ENCODE measurements at regions of chr2 and their contacts with region 1.

Region 1: DNA sequence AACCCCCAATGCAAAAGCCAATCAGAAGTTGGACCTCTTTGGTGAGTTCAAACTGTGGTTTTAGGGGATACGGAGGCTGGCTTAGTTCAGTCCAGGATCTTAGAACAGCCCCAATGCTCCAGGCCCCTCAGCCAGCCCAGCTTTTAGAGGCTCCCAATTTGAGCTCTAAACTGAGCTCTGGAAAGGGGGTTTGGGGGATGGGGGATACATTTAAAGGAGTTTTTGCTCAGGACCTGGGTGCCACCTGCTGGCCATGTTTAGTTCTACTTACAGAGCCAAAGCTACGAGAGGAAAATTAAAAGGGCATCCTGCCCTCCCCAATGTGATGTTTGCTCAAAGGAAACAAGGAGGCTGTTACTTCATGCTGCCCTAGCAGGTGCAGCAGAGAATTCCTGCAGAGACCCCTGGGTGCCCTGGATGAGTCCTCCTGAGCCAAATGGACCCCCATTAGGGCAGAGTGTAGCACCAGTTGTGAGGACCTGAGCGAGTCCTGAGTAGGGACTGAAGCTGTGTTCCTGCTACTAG is 15.9 kb upstream of the TMEM214 start:
- DNase-seq: peak; percentile 69
- ATAC-seq: peak; percentile 55
- H3K4me3 Mint-ChIP-seq: no peak overlapping the region
- H3K27ac Mint-ChIP-seq: no peak overlapping the region
- H3K4me1 Mint-ChIP-seq: no peaks in the 10 kb centered on the region
- H3K27me3 Mint-ChIP-seq: no peaks in the 10 kb centered on the region

Region 2: DNA sequence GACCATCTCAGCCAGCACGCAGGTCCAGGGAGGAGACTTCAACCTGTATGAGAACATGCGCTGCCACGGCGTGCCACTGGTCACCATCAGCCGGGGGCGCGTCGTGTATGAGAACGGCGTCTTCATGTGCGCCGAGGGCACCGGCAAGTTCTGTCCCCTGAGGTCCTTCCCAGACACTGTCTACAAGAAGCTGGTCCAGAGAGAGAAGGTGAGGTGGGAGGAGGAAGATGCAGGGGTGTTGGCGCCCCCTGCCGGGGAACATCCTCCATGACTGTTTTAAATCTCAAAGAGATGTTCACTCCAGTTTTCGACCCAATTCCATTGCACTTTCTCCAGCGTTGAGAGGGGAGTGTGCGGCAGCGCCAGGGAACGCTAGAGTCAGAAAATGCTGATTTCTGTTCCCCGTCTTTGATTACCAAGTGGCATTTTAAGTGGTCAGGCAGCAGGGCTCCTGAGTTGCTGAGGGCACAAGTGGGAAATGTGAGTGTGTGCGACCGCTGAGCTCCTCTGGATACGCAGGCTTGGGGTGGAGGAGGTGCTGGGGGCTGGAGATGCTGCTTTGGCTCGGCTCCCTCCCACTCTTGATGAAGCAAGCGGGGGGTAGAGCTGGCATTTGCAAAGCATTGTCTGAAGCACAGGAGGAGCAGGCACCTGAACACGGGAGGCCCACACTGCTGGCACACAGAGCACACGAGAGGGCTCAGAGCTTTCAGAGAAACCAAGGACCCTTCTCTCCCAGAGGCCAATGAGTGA is 74.1 kb before region 1 on chr2:
- CTCF ChIA-PET with region 1: interaction called, 11 read pairs
- POLR2A ChIA-PET with region 1: no interaction called
- intact Hi-C with region 1: no loop called
- DNase-seq: peak; percentile 84
- ATAC-seq: peak; percentile 64
- H3K4me3 Mint-ChIP-seq: no peak overlapping the region
- H3K27ac Mint-ChIP-seq: no peak overlapping the region
- H3K4me1 Mint-ChIP-seq: peaks cover 2% of the 10 kb centered on the region
- H3K27me3 Mint-ChIP-seq: peaks cover 4% of the 10 kb centered on the region

Region 3: GRCh38 chr2:26976237-26976636 is 40.6 kb before region 1 on chr2:
- CTCF ChIA-PET with region 1: interaction called, 12 read pairs
- POLR2A ChIA-PET with region 1: no interaction called
- intact Hi-C with region 1: no loop called
- DNase-seq: no peak
- ATAC-seq: no peak
- H3K4me3 Mint-ChIP-seq: no peak overlapping the region
- H3K27ac Mint-ChIP-seq: no peak overlapping the region
- H3K4me1 Mint-ChIP-seq: peaks cover 6% of the 10 kb centered on the region
- H3K27me3 Mint-ChIP-seq: no peaks in the 10 kb centered on the region

Region 4: GRCh38 chr2:26982102-26982742 is 34.6 kb before region 1 on chr2:
- CTCF ChIA-PET with region 1: interaction called, 12 read pairs
- POLR2A ChIA-PET with region 1: interaction called, 3 read pairs
- intact Hi-C with region 1: no loop called
- DNase-seq: peak; percentile 42
- ATAC-seq: peak; percentile 57
- H3K4me3 Mint-ChIP-seq: no peak overlapping the region
- H3K27ac Mint-ChIP-seq: no peak overlapping the region
- H3K4me1 Mint-ChIP-seq: no peaks in the 10 kb centered on the region
- H3K27me3 Mint-ChIP-seq: no peaks in the 10 kb centered on the region

Region 5: DNA sequence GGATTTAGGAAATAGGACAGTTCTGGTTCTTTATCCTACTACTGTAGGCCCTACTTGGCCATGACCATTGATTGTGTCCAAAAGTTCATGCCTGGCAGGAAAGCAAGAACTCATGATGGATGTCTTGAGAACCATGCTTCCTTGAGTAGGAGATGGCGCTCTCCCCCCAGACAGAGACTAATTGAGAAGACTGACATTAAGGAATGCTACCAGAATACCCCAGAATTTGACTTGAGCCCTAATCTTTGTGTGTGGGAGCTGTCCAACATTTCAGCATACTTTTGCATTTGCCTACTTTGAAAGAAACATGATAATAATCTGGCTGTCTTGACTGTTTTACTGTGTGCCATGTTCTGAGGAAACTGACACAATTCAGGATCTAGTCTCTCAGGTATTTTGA is 23.1 kb before region 1 on chr2:
- CTCF ChIA-PET with region 1: interaction called, 11 read pairs
- POLR2A ChIA-PET with region 1: no interaction called
- intact Hi-C with region 1: no loop called
- DNase-seq: no peak
- ATAC-seq: no peak
- H3K4me3 Mint-ChIP-seq: no peak overlapping the region
- H3K27ac Mint-ChIP-seq: no peak overlapping the region
- H3K4me1 Mint-ChIP-seq: no peaks in the 10 kb centered on the region
- H3K27me3 Mint-ChIP-seq: peaks cover under 1% of the 10 kb centered on the region

Region 6: DNA sequence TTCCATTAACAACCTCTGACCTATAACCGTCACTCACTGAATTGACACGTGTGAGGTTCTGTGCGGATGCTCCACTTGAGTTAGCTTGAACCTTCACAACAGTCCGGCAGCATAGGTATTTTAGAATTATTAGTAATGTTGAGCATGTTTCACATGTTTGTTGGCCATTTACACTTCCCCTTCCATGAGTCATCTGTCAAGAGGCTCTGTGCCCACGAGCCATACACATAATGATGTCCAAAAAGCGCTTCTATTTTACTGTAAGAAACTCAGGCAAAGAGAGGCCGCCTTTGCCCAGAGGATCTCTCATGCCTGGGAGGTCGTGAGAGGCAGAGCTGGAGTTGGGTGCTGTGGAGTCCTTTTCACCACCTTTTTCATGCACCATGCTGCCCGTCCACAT is 13.0 kb before region 1 on chr2:
- CTCF ChIA-PET with region 1: interaction called, 13 read pairs
- POLR2A ChIA-PET with region 1: interaction called, 6 read pairs
- intact Hi-C with region 1: no loop called
- DNase-seq: no peak
- ATAC-seq: no peak
- H3K4me3 Mint-ChIP-seq: no peak overlapping the region
- H3K27ac Mint-ChIP-seq: no peak overlapping the region
- H3K4me1 Mint-ChIP-seq: no peaks in the 10 kb centered on the region
- H3K27me3 Mint-ChIP-seq: peaks cover 7% of the 10 kb centered on the region

Region 7: GRCh38 chr2:27038631-27039339 is 21.9 kb after region 1 on chr2:
- CTCF ChIA-PET with region 1: interaction called, 10 read pairs
- POLR2A ChIA-PET with region 1: no interaction called
- intact Hi-C with region 1: no loop called
- DNase-seq: no peak
- ATAC-seq: no peak
- H3K4me3 Mint-ChIP-seq: no peak overlapping the region
- H3K27ac Mint-ChIP-seq: no peak overlapping the region
- H3K4me1 Mint-ChIP-seq: peaks cover 16% of the 10 kb centered on the region
- H3K27me3 Mint-ChIP-seq: no peaks in the 10 kb centered on the region

Region 8: GRCh38 chr2:27059141-27059820 is 42.4 kb after region 1 on chr2:
- CTCF ChIA-PET with region 1: no interaction called
- POLR2A ChIA-PET with region 1: no interaction called
- intact Hi-C with region 1: no loop called
- DNase-seq: no peak
- ATAC-seq: no peak
- H3K4me3 Mint-ChIP-seq: no peak overlapping the region
- H3K27ac Mint-ChIP-seq: no peak overlapping the region
- H3K4me1 Mint-ChIP-seq: no peaks in the 10 kb centered on the region
- H3K27me3 Mint-ChIP-seq: no peaks in the 10 kb centered on the region

Region 9: GRCh38 chr2:27133242-27133791 is 116.5 kb after region 1 on chr2:
- CTCF ChIA-PET with region 1: no interaction called
- POLR2A ChIA-PET with region 1: no interaction called
- intact Hi-C with region 1: no loop called
- DNase-seq: peak; percentile 63
- ATAC-seq: peak; percentile 48
- H3K4me3 Mint-ChIP-seq: peak overlapping the region; percentile 81
- H3K27ac Mint-ChIP-seq: peak overlapping the region; percentile 67
- H3K4me1 Mint-ChIP-seq: peaks cover 16% of the 10 kb centered on the region
- H3K27me3 Mint-ChIP-seq: no peaks in the 10 kb centered on the region

Region 10: GRCh38 chr2:28209261-28209691 is 1192.4 kb after region 1 on chr2:
- CTCF ChIA-PET with region 1: no interaction called
- POLR2A ChIA-PET with region 1: no interaction called
- intact Hi-C with region 1: no loop called
- DNase-seq: no peak
- ATAC-seq: no peak
- H3K4me3 Mint-ChIP-seq: no peak overlapping the region
- H3K27ac Mint-ChIP-seq: no peak overlapping the region
- H3K4me1 Mint-ChIP-seq: no peaks in the 10 kb centered on the region
- H3K27me3 Mint-ChIP-seq: no peaks in the 10 kb centered on the region